ENCODE measurements at regions of chr19 and their contacts with region 1.

Region 1: GRCh38 chr19:9538183-9539058 is at the start of gene ZNF426:
- DNase-seq: peak; percentile 93 to 96
- ATAC-seq: peak; percentile 98
- H3K4me3 ChIP-seq: peak within 1 kb of the TSS; percentile 88 to 89
- H3K27ac ChIP-seq: peak within 1 kb of the TSS; percentile 33 to 73
- H3K4me1 ChIP-seq: no peaks in the 10 kb centered on the region
- H3K27me3 ChIP-seq: no peaks in the 10 kb centered on the region
- total RNA-seq, gene ZNF426: 17.3 to 22.2 TPM

Region 2: GRCh38 chr19:9323919-9324583 is 214.4 kb before region 1 on chr19 and contains the start of gene ZNF559:
- intact Hi-C with region 1: loop called in 1 of 2 experiments (anchors 10 kb)
- DNase-seq: peak; percentile 96 to 98
- ATAC-seq: peak; percentile 100
- H3K4me3 ChIP-seq: peak within 1 kb of the TSS; percentile 54 to 69
- H3K27ac ChIP-seq: peak within 1 kb of the TSS; percentile 72 to 78
- H3K4me1 ChIP-seq: no peaks in the 10 kb centered on the region
- H3K27me3 ChIP-seq: no peaks in the 10 kb centered on the region
- total RNA-seq, gene ZNF559: 15.4 to 31.1 TPM

Region 3: GRCh38 chr19:9658769-9659168 is 120.3 kb after region 1 on chr19:
- intact Hi-C with region 1: no loop called
- DNase-seq: no peak
- ATAC-seq: no peak
- H3K4me3 ChIP-seq: no peak overlapping the region
- H3K27ac ChIP-seq: no peak overlapping the region
- H3K4me1 ChIP-seq: no peaks in the 10 kb centered on the region
- H3K27me3 ChIP-seq: no peaks in the 10 kb centered on the region

Measured in aorta (tissue), 5 donors.